ENCODE measurements at regions of chr1 and their contacts with region 1.

Region 1: GRCh38 chr1:70410604-70411359 is at the start of gene CTH:
- DNase-seq: peak; percentile 94
- ATAC-seq: peak; percentile 97
- H3K4me3 ChIP-seq: peak within 1 kb of the TSS; percentile 74 to 89 (median 84)
- H3K27ac ChIP-seq: peak within 1 kb of the TSS; percentile 95
- H3K4me1 ChIP-seq: peaks cover 16% of the 10 kb centered on the region; the same call in 1 of the 2 replicates
- H3K27me3 ChIP-seq: no peaks in the 10 kb centered on the region; a peak in 1 of 5 replicates
- CTCF ChIP-seq: no peak
- EP300 ChIP-seq: 0 out of 4 replicates have a peak, but pooled peaks of 1 of the 2 experiments have one; percentile 22
- POLR2A ChIP-seq: peak; percentile 98
- RAD21 ChIP-seq: peak; percentile 21; the same call in 1 of the 2 replicates
- total RNA-seq, gene CTH: 8.7 and 12.4 TPM in 2 replicates

Region 2: DNA sequence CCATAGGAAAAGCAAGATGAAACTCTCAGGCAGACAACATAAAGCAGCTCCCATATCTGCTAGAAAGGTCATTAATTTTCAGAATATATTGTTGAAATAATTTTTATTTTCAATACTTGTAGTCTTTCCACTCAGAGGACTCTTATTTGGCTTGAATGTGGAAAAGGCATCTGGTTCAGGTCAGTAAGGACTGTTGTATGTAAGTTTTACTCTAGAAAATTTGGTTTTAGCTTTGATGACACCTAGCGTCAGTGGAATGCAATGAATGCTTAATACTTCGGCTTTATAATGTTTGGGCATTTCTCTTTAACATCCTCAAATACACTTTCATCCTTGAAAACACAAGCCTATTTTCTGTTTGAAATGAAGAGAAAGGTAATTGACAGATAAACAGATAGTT is 268.7 kb before region 1 on chr1:
- CTCF ChIA-PET with region 1: no interaction called
- POLR2A ChIA-PET with region 1: interaction called, 7 read pairs
- in situ Hi-C with region 1: no loop called
- intact Hi-C with region 1: loop called (anchors 5 kb)
- DNase-seq: no peak
- ATAC-seq: no peak
- H3K4me3 ChIP-seq: no peak overlapping the region
- H3K27ac ChIP-seq: no peak overlapping the region
- H3K4me1 ChIP-seq: no peaks in the 10 kb centered on the region
- H3K27me3 ChIP-seq: no peaks in the 10 kb centered on the region
- CTCF ChIP-seq: no peak
- EP300 ChIP-seq: no peak
- POLR2A ChIP-seq: no peak
- RAD21 ChIP-seq: no peak

Region 3: DNA sequence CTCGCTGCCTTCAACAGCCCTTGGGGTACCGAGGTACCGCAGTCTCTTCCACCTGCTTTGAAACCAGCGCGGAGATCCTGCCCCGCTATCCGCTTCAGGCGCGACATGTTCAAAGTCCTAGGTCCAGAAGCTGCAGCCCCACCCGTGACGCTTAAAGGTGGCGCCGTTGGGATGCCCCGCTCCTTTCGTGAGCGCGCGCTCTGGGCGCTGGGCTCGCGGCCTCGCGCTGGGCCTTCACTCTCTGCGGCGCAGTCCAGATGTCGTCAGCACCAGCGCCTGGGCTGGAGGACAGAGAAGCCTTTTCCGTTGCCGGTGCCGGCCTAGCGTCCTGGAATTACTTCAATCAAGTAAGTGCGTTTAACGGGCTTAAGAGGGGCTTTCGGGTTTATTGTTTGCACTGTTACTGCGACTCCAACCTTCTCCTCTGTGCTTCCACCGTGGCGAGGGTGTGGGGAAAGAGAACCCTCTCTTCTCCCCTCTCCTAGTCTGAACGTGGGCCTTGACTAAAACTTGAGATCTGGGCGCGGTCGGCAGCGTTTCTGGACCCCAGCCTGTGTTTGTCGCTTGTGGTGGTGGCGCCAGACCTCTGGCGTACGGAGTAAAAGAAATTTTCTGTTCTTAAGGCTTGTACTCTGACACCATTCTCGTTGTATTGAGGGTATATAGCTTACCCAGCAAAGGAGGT is 205.2 kb before region 1 on chr1 and contains the start of gene LRRC40:
- CTCF ChIA-PET with region 1: no interaction called
- POLR2A ChIA-PET with region 1: interaction called, 13 read pairs
- in situ Hi-C with region 1: loop called (anchors 10 kb)
- intact Hi-C with region 1: no loop called
- DNase-seq: peak; percentile 94
- ATAC-seq: peak; percentile 94
- H3K4me3 ChIP-seq: peak within 1 kb of the TSS; percentile 81 to 98 (median 90)
- H3K27ac ChIP-seq: peak within 1 kb of the TSS; percentile 96
- H3K4me1 ChIP-seq: peaks cover 58% of the 10 kb centered on the region
- H3K27me3 ChIP-seq: no peaks in the 10 kb centered on the region; a peak in 2 of 5 replicates
- CTCF ChIP-seq: no peak
- EP300 ChIP-seq: peak in 1 of 2 experiments; percentile 37; a peak in 2 of 4 replicates
- POLR2A ChIP-seq: peak; percentile 88 to 95
- RAD21 ChIP-seq: peak; percentile 11; the same call in 1 of the 2 replicates
- total RNA-seq, gene LRRC40: 32.7 and 54.1 TPM in 2 replicates

Region 4: DNA sequence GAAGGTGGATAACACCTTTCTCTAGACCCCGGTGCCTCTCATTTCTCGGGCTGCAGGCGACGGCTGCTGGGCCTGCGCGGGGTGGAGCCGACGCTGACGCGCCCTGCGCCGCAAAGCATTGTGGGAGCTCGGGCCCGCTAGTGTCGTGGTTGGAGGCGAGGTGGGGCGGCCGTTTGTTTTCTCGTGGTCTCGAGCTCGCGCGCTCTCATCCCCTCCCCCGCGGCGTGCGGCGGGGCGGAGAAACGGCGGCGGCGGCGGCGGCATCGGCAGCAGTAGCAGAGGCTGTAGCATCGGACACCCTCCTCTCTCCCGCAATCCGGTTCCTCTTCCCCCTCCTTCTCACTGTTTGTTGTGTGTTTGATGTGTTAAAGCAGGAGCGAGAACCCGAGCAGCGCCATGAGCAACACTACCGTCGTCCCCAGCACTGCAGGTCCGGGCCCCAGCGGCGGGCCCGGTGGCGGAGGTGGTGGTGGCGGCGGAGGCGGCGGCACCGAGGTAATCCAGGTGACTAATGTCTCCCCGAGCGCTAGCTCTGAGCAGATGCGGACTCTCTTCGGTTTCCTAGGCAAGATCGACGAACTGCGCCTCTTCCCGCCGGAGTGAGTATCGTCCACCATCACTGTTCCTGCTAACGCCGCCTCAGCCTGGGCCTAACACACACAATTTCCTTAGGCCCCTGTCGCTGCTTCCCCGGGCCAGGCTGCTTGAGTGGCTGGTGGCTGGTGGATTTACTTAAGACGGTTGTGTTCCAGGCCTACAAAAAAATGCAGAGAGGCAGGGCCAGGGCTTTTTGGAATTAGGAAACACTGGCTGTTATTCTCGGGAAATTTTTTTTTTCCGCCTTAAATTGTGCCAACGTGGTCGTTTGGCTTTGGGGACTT is 189.3 kb before region 1 on chr1 and contains the start of gene SRSF11:
- CTCF ChIA-PET with region 1: no interaction called
- POLR2A ChIA-PET with region 1: interaction called, 25 read pairs
- in situ Hi-C with region 1: no loop called
- intact Hi-C with region 1: loop called (anchors 5 kb)
- DNase-seq: peak; percentile 85
- ATAC-seq: peak; percentile 97
- H3K4me3 ChIP-seq: peak within 1 kb of the TSS; percentile 82 to 97 (median 91)
- H3K27ac ChIP-seq: peak within 1 kb of the TSS; percentile 97
- H3K4me1 ChIP-seq: peaks cover 37% of the 10 kb centered on the region
- H3K27me3 ChIP-seq: no peaks in the 10 kb centered on the region; a peak in 1 of 5 replicates
- CTCF ChIP-seq: no peak
- EP300 ChIP-seq: no peak
- POLR2A ChIP-seq: peak; percentile 69 to 81
- RAD21 ChIP-seq: peak; percentile 36; the same call in 1 of the 2 replicates
- total RNA-seq, gene SRSF11: 104 and 118 TPM in 2 replicates

Region 5: DNA sequence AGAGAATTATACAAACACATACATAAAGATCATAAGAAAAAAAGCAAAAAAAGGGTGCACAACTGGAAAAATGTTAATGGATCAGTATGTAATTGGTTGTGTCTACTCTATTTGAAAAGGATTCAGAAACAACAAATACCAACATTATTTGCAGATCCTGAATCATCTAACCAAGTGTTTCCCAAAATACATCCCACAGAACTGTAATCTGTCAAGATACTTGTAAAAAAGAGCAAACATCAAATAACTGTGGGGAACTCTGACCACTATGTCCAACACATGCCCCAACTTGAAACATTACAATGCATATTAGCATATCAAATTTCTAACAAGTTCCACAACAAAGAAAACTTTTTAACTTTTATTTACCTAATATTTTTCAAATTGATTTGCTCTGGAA is 78.8 kb before region 1 on chr1:
- CTCF ChIA-PET with region 1: no interaction called
- POLR2A ChIA-PET with region 1: no interaction called
- in situ Hi-C with region 1: no loop called
- intact Hi-C with region 1: no loop called
- DNase-seq: no peak
- ATAC-seq: no peak
- H3K4me3 ChIP-seq: no peak overlapping the region
- H3K27ac ChIP-seq: no peak overlapping the region
- H3K4me1 ChIP-seq: peaks cover 6% of the 10 kb centered on the region
- H3K27me3 ChIP-seq: no peaks in the 10 kb centered on the region
- CTCF ChIP-seq: no peak
- EP300 ChIP-seq: no peak
- POLR2A ChIP-seq: no peak
- RAD21 ChIP-seq: no peak

Region 6: GRCh38 chr1:70354332-70355110 is 56.3 kb before region 1 on chr1 and contains the start of gene ANKRD13C:
- CTCF ChIA-PET with region 1: no interaction called
- POLR2A ChIA-PET with region 1: interaction called, 118 read pairs
- in situ Hi-C with region 1: loop called (anchors 5 kb)
- intact Hi-C with region 1: loop called (anchors 1 kb)
- DNase-seq: peak; percentile 95
- ATAC-seq: peak; percentile 97
- H3K4me3 ChIP-seq: peak within 1 kb of the TSS; percentile 89 to 94 (median 92)
- H3K27ac ChIP-seq: peak within 1 kb of the TSS; percentile 95
- H3K4me1 ChIP-seq: peaks cover 31% of the 10 kb centered on the region
- H3K27me3 ChIP-seq: no peaks in the 10 kb centered on the region; a peak in 1 of 5 replicates
- CTCF ChIP-seq: peak; percentile 15; the same call in 1 of the 2 replicates
- EP300 ChIP-seq: 0 out of 4 replicates have a peak, but pooled peaks of 1 of the 2 experiments have one; percentile 13
- POLR2A ChIP-seq: peak; percentile 97 to 98
- RAD21 ChIP-seq: peak; percentile 7; the same call in 1 of the 2 replicates
- total RNA-seq, gene ANKRD13C: 17.6 and 18.8 TPM in 2 replicates

Region 7: DNA sequence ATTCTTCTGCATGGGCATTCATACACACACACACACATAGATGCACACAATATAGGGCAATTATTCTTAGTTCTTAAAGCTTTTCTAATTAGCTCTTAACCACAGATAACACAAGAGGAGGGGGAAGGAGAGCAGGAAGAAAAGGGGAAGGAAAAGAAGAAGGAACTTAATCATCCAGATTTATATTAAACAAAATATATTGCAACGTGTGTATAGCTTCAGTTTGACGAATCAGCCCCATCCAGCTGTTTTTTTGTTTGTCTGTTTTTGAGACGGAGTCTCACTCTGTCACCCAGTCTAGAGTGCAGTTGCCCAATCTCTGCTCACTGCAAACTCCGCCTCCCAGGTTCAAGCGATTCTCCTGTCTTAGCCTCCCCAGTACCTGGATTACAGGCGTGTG is 34.6 kb before region 1 on chr1:
- CTCF ChIA-PET with region 1: no interaction called
- POLR2A ChIA-PET with region 1: no interaction called
- in situ Hi-C with region 1: no loop called
- intact Hi-C with region 1: no loop called
- DNase-seq: no peak
- ATAC-seq: no peak
- H3K4me3 ChIP-seq: no peak overlapping the region
- H3K27ac ChIP-seq: no peak overlapping the region
- H3K4me1 ChIP-seq: no peaks in the 10 kb centered on the region
- H3K27me3 ChIP-seq: no peaks in the 10 kb centered on the region
- CTCF ChIP-seq: no peak
- EP300 ChIP-seq: no peak
- POLR2A ChIP-seq: no peak
- RAD21 ChIP-seq: no peak

Measured in HepG2 (cell line).